ENCODE measurements at regions of chr5 and their contacts with region 1.

Region 1: GRCh38 chr5:11941566-11941965 is 37.3 kb upstream of the CTNND2 start:
- DNase-seq: no peak
- ATAC-seq: no peak
- H3K4me3 ChIP-seq: no peak overlapping the region
- H3K4me3 Mint-ChIP-seq: no peak overlapping the region
- H3K27ac ChIP-seq: no peak overlapping the region
- H3K27ac Mint-ChIP-seq: no peak overlapping the region
- H3K4me1 ChIP-seq: no peaks in the 10 kb centered on the region
- H3K4me1 Mint-ChIP-seq: no peaks in the 10 kb centered on the region
- H3K27me3 ChIP-seq: no peaks in the 10 kb centered on the region
- H3K27me3 Mint-ChIP-seq: no peaks in the 10 kb centered on the region
- CTCF ChIP-seq: no peak

Region 2: DNA sequence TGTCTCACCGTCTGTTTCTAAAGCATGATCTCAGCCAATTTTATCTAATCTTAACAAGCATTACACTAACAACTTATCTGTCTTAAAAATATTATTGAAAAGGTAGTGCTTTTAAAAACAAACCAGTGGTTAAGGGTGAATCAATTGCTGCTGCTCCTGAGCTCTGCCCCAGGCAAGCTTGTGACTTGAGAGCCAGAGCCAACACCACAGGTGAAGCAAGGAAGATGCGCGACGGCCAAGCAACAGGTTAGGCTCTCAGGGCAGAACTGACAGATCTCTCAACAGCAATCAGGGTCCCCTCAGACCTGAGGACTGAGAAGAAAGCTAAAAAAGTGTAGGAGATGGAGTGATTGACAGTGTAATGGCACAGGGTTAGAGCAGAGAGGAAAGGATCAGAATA is 197.4 kb before region 1 on chr5:
- CTCF ChIA-PET with region 1: no interaction called
- POLR2A ChIA-PET with region 1: no interaction called
- intact Hi-C with region 1: no loop called
- DNase-seq: no peak
- ATAC-seq: no peak
- H3K4me3 ChIP-seq: no peak overlapping the region
- H3K4me3 Mint-ChIP-seq: no peak overlapping the region
- H3K27ac ChIP-seq: no peak overlapping the region
- H3K27ac Mint-ChIP-seq: no peak overlapping the region
- H3K4me1 ChIP-seq: no peaks in the 10 kb centered on the region
- H3K4me1 Mint-ChIP-seq: no peaks in the 10 kb centered on the region
- H3K27me3 ChIP-seq: no peaks in the 10 kb centered on the region
- H3K27me3 Mint-ChIP-seq: no peaks in the 10 kb centered on the region
- CTCF ChIP-seq: no peak

Region 3: DNA sequence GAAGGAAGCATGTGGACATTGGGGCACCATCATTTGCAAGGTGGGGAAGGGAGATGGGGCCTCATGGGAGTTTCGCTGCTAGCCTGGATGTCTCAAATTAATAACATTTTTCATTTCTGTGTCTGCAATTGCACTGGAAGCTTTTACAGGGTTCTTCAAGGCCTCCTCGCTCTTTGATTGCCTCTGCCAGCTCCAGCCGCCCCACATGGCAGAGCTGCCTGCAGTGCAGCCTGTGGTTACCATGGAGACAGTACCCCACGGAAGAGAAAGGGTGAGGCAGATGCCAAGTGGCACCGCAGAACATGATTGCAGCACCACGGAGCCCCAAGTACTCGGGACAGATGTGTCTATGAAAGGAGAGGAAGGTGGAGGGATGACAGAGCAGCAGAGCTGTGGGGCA is 62.8 kb before region 1 on chr5:
- CTCF ChIA-PET with region 1: no interaction called
- POLR2A ChIA-PET with region 1: no interaction called
- intact Hi-C with region 1: loop called in 1 of 2 experiments (anchors 2 kb)
- DNase-seq: no peak
- ATAC-seq: no peak
- H3K4me3 ChIP-seq: no peak overlapping the region
- H3K4me3 Mint-ChIP-seq: no peak overlapping the region
- H3K27ac ChIP-seq: no peak overlapping the region
- H3K27ac Mint-ChIP-seq: no peak overlapping the region
- H3K4me1 ChIP-seq: no peaks in the 10 kb centered on the region
- H3K4me1 Mint-ChIP-seq: no peaks in the 10 kb centered on the region
- H3K27me3 ChIP-seq: no peaks in the 10 kb centered on the region
- H3K27me3 Mint-ChIP-seq: no peaks in the 10 kb centered on the region
- CTCF ChIP-seq: no peak